CD4-positive, alpha-beta memory T cell (primary cell): ENCODE measurements at regions of chr1 and their contacts with region 1.

Region 1: GRCh38 chr1:7983086-7983778 is 21.7 kb downstream of the PARK7 start:
- DNase-seq: no peak
- H3K4me3 ChIP-seq: no peak overlapping the region
- H3K4me3 Mint-ChIP-seq: no peak overlapping the region
- H3K27ac ChIP-seq: no peak overlapping the region
- H3K27ac Mint-ChIP-seq: peak overlapping the region in 1 of 7 donors; percentile 62
- H3K4me1 ChIP-seq: peaks cover 5% of the 10 kb centered on the region
- H3K4me1 Mint-ChIP-seq: peaks cover 6 to 10% (median 8%) of the 10 kb centered on the region in 4 donors
- H3K27me3 ChIP-seq: no peaks in the 10 kb centered on the region
- H3K27me3 Mint-ChIP-seq: no peaks in the 10 kb centered on the region

Region 2: DNA sequence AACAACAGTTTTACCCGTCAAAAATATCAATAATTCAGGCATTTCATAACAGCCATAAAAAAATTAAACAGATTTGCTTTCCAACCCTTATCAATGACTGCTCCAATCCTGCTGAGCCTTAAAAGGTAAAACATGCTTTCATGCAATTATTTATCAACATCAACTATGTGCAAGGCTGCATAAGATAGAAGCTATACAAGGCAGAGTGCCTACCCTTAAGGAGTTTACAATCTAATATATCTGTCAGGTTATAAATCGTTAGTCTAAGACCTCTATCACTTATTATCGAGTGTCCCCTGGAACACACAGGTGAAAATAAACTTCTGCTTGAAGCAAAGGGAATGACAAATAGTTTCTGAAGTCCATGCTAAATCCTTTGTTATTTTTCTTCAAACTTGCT is 41.1 kb after region 1 on chr1:
- CTCF ChIA-PET with region 1: no interaction called
- POLR2A ChIA-PET with region 1: no interaction called
- intact Hi-C with region 1: no loop called
- DNase-seq: no peak
- H3K4me3 ChIP-seq: no peak overlapping the region
- H3K4me3 Mint-ChIP-seq: no peak overlapping the region
- H3K27ac ChIP-seq: no peak overlapping the region
- H3K27ac Mint-ChIP-seq: no peak overlapping the region
- H3K4me1 ChIP-seq: peaks cover 14% of the 10 kb centered on the region
- H3K4me1 Mint-ChIP-seq: peaks cover 8 to 13% (median 10%) of the 10 kb centered on the region in 4 donors
- H3K27me3 ChIP-seq: peaks cover 6% of the 10 kb centered on the region
- H3K27me3 Mint-ChIP-seq: peaks cover 7 to 13% of the 10 kb centered on the region in 2 donors

Region 3: DNA sequence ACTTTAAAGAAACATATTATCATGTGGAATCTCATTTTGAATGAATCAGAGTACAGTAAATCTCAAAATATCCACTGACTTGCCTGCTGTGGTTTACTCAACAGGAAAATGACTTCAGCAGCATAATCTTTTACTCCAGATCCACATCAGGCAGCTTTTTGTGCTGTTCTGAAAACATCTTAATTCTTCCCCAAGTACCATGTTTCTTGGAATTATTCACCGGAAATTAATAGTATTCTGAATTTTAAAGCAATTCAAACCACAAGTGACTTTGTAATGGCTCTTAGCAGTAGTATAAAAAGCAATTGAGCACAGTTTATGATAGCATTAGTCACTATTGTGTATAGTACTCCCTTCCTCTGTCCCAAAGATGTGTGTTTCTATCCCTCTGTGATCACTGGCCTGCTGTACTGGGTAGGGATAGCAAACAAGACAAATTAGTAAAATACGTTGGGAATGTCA is 107.0 kb after region 1 on chr1:
- CTCF ChIA-PET with region 1: no interaction called
- POLR2A ChIA-PET with region 1: no interaction called
- intact Hi-C with region 1: no loop called
- DNase-seq: no peak
- H3K4me3 ChIP-seq: no peak overlapping the region
- H3K4me3 Mint-ChIP-seq: no peak overlapping the region
- H3K27ac ChIP-seq: no peak overlapping the region
- H3K27ac Mint-ChIP-seq: no peak overlapping the region
- H3K4me1 ChIP-seq: no peaks in the 10 kb centered on the region
- H3K4me1 Mint-ChIP-seq: peaks cover 0 to 2% (median 0%) of the 10 kb centered on the region in 4 donors
- H3K27me3 ChIP-seq: no peaks in the 10 kb centered on the region
- H3K27me3 Mint-ChIP-seq: peaks cover 0 to 5% of the 10 kb centered on the region in 2 donors

Region 4: GRCh38 chr1:8314346-8315280 is 331.4 kb after region 1 on chr1:
- CTCF ChIA-PET with region 1: interaction called, 10 read pairs
- POLR2A ChIA-PET with region 1: no interaction called
- intact Hi-C with region 1: loop called (anchors 1 kb)
- DNase-seq: peak; percentile 44 to 53 (median 50)
- H3K4me3 ChIP-seq: no peak overlapping the region
- H3K4me3 Mint-ChIP-seq: peak overlapping the region in 1 of 8 donors; percentile 55
- H3K27ac ChIP-seq: no peak overlapping the region
- H3K27ac Mint-ChIP-seq: peak overlapping the region in 1 of 7 donors; percentile 69
- H3K4me1 ChIP-seq: peaks cover 11% of the 10 kb centered on the region
- H3K4me1 Mint-ChIP-seq: peaks cover 4 to 30% (median 16%) of the 10 kb centered on the region in 4 donors
- H3K27me3 ChIP-seq: peaks cover 8% of the 10 kb centered on the region
- H3K27me3 Mint-ChIP-seq: peaks cover 16 to 24% of the 10 kb centered on the region in 2 donors